ENCODE measurements at regions of chr9 and their contacts with region 1.

Region 1: DNA sequence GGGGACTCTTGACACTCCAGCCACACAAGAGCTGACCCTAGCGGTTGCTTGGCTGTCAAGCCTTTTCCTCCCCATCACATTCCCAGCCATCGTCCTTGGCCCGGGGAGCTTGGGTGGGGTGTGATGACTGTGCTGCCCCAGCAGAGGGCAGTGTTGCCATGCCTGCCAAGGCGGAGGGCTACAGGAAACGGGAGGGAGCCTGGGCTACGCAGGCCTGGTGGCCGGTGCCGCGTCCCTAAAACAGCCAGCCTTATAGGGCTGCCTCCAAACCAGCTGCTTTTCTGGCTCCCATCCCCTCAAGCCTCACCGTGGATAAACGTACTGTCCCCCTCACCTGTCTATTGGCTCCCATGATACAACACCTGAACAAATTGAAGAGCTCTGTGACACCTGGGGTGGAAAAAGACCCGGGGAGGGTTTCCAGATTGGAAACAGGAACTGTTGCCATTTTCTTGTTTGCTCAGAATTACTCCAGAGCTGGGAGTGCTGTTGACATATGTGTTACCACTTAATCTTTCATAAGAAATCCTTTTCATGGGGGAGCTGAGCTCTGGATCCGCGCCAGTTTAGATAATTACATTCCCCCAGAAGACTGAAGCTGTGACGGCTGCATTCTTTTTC is 72.8 kb upstream of the ASTN2 start:
- DNase-seq: peak; percentile 35
- H3K4me3 Mint-ChIP-seq: no peak overlapping the region
- H3K27ac Mint-ChIP-seq: no peak overlapping the region
- H3K4me1 Mint-ChIP-seq: no peaks in the 10 kb centered on the region
- H3K27me3 Mint-ChIP-seq: peaks cover 9% of the 10 kb centered on the region

Region 2: GRCh38 chr9:117425566-117425965 is 62.1 kb before region 1 on chr9:
- CTCF ChIA-PET with region 1: no interaction called
- intact Hi-C with region 1: loop called (anchors 10 kb)
- DNase-seq: no peak
- H3K4me3 Mint-ChIP-seq: no peak overlapping the region
- H3K27ac Mint-ChIP-seq: no peak overlapping the region
- H3K4me1 Mint-ChIP-seq: no peaks in the 10 kb centered on the region
- H3K27me3 Mint-ChIP-seq: peaks cover 10% of the 10 kb centered on the region

Region 3: DNA sequence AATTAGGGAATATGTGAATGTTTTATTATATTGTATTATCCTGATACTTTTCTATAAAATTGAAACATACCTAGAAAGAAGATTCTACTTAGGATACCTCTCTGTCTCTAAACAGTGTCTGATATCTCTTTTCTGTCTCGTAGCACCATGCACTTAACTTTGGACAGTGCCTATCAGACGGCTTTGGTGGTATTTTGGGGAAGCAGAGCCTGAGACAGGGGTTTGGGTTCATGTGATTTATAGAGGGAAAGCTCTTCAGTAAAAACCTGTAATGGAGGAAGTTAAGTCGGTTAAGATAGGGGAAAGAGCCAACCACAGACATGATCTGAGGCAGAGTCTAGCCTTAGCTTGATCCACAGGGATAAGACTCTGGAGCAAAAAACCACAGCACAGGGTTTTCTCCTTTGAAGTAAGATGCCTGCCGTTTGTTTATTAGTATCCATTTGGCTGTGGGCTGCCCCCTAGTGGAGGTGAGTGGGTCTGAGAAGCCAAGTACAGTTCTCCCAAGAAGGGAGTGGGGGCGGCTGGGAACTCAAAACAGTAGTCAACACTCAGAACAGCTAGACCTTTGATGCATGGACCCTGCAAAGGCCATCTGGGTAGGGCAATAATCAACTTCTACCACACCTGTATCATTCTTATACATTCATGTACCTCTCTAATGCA is 68.4 kb after region 1 on chr9:
- CTCF ChIA-PET with region 1: no interaction called
- intact Hi-C with region 1: loop called (anchors 1 kb)
- DNase-seq: peak; percentile 61
- H3K4me3 Mint-ChIP-seq: no peak overlapping the region
- H3K27ac Mint-ChIP-seq: no peak overlapping the region
- H3K4me1 Mint-ChIP-seq: no peaks in the 10 kb centered on the region
- H3K27me3 Mint-ChIP-seq: peaks cover 11% of the 10 kb centered on the region

Region 4: DNA sequence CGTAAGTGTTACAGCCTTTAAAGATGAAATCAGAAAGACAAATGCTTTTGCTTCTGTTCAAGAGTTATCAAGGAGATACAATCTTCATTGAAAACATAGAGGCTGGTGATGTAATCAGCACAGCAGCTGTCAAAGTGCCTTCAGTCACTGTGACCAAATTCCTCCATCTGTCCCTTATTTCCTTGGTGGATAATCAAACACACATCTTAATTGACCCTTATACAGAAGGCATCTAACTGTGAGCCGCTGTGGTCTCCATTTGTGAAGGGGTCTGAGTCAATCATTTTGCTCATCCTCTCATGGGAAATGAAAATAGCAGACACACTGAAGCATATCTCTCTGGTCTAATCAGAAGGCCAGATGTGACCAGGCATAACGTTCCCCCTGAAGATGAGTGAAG is 86.4 kb after region 1 on chr9:
- CTCF ChIA-PET with region 1: no interaction called
- intact Hi-C with region 1: no loop called
- DNase-seq: no peak
- H3K4me3 Mint-ChIP-seq: no peak overlapping the region
- H3K27ac Mint-ChIP-seq: no peak overlapping the region
- H3K4me1 Mint-ChIP-seq: no peaks in the 10 kb centered on the region
- H3K27me3 Mint-ChIP-seq: no peaks in the 10 kb centered on the region

Measured in activated naive CD4-positive, alpha-beta T cell treated with anti-CD3 and anti-CD28 coated beads for 36 hours (primary cell).